CD4-positive, alpha-beta T cell (primary cell): ENCODE measurements at regions of chr1 and their contacts with region 1.

Region 1: DNA sequence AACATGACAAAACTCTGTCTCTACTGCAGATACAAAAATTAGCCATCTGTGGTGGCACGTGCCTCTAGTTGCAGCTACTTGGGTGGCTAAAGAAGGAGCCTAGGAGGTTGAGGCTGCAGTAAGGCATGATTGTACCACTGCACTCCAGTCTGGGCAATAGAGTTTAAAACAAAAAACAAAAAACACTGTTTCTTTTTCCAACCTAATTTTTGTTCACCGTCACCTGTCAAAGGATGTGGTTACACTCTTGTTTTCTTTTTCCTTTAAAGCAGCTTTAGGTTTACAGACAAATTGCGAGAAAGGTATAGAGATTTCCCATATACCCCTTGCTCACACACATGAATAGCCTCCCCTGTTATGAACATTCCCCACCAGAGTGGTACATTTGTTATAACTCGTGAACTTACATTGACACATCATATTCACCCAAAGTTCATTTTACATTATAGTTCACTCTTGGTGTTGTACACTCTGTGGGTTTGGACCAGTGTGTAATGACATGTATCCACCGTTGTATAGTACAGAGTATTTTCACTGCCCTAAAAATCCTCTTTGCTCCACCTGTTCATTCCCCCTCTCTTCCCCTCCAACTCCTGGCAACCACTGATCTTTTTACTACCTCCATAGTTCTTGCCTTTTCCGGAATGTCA is 26.2 kb downstream of the SMG7 start:
- DNase-seq: peak in 1 of 14 experiments; percentile 34
- ATAC-seq: peak; percentile 80
- H3K4me3 ChIP-seq: no peak overlapping the region
- H3K4me3 Mint-ChIP-seq: peak overlapping the region; percentile 47
- H3K27ac ChIP-seq: peak overlapping the region in 1 of 2 donors; percentile 1
- H3K27ac Mint-ChIP-seq: peak overlapping the region; percentile 65
- H3K4me1 ChIP-seq: peaks cover 16% of the 10 kb centered on the region
- H3K4me1 Mint-ChIP-seq: peaks cover 82% of the 10 kb centered on the region
- H3K27me3 ChIP-seq: no peaks in the 10 kb centered on the region
- H3K27me3 Mint-ChIP-seq: no peaks in the 10 kb centered on the region
- CTCF ChIP-seq: no peak

Region 2: DNA sequence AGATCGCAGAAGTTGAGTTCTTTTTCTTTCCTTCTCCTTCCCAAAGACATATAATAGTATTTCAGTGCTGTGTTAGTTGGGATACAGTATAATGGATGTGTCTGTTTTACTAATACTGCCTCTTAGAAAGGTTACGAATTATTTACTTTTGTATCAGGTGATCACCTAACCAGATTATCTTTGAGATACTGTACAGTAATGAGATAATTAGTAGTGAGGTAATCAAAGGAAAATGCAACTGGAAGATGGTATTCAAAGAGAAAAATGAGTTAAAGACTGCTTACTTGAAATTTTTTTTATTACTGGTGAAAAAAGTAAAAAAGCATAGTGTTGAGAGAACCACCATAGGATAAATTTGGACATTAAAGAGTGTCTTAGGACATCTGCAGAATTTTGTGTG is 15.3 kb before region 1 on chr1:
- CTCF ChIA-PET with region 1: no interaction called
- POLR2A ChIA-PET with region 1: interaction called, 3 read pairs
- intact Hi-C with region 1: loop called in 1 of 2 experiments (anchors 2 kb)
- DNase-seq: no peak
- ATAC-seq: no peak
- H3K4me3 ChIP-seq: no peak overlapping the region
- H3K4me3 Mint-ChIP-seq: no peak overlapping the region
- H3K27ac ChIP-seq: no peak overlapping the region
- H3K27ac Mint-ChIP-seq: peak overlapping the region; percentile 48
- H3K4me1 ChIP-seq: peaks cover 8% of the 10 kb centered on the region
- H3K4me1 Mint-ChIP-seq: peaks cover 92% of the 10 kb centered on the region
- H3K27me3 ChIP-seq: no peaks in the 10 kb centered on the region
- H3K27me3 Mint-ChIP-seq: no peaks in the 10 kb centered on the region
- CTCF ChIP-seq: no peak